ENCODE measurements at regions of chr16 and their contacts with region 1.

Region 1: DNA sequence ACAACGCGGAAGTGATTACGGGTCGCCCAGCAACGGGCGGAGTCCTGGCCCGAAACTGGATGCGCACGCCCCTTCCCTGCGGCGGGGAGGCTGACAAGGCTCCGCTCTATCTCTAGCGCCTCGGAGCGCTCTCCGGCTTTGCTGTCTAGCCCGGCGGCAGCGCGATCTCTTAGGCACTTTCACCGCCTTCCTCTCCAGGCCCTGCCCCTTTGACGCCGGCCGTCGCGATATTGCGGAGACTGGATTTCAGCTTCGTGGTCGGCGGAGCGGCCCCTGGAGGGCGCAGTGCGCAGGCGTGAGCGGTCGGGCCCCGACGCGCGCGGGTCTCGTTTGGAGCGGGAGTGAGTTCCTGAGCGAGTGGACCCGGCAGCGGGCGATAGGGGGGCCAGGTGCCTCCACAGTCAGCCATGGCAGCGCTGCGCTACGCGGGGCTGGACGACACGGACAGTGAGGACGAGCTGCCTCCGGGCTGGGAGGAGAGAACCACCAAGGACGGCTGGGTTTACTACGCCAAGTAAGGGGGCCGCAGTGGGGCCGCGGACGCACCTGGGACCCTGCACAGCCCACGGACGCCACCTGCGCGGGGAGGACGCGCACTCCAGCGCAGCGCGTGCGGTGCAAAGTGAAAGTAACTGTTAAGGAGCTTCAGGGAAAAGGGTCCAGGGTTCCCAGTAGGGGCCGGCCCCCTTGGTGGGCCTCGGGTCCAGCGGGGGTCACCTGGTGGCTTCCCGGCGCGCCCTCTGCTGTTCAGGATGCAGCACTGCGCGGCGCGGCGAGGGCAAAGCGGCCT is at the start of gene WWOX:
- DNase-seq: peak; percentile 98
- ATAC-seq: peak; percentile 96
- total RNA-seq, gene WWOX: 13.1 TPM

Region 2: DNA sequence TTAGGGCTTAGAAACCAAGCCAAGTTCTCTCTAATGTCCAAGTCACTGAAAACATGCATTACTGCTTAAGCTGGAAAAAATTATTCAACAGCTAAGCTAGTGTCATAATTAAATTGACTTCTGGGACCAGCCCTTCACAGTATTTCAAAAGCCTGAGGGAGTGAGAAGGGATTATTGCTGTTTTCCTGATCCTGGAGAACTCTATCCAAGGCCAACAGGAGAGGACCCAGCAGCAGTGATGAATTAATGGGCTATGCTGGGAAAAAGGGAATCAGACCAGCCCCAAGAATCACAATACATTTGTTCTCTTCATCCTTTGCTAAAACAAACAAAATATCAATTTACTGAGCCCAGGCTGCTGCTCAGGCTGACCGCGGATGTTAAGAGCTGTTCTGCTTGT is 111.8 kb before region 1 on chr16:
- intact Hi-C with region 1: no loop called
- DNase-seq: no peak
- ATAC-seq: no peak

Region 3: DNA sequence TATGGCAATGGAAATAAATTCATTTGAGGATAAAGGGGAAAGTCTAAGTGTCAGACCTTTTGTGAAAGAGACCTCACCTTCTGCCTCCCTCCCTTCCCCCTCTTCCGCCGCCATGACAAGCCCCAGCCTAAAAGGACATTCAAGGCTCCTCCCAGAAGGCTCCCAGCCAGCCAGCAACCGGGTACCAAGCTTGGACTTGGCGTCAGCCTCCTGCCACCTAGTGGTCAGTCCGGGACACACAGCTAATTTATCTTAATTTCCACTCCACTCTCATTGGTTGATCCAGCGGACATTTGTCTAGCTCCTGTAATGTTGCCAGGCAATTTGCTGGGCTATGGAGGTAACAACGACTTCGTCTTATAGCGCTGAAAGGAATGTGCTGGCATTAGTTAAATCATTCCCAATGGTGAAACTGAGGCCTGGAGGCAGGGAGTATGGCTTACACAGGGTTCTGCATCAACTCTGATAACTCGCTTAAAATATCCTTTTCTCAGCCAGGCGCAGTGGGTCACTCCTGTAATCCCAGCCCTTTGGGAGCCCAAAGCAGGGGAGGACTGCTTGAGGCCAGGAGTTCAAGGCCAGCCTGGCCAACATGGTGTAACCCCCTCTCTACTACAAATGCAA is 96.5 kb before region 1 on chr16:
- intact Hi-C with region 1: loop called (anchors 5 kb)
- DNase-seq: peak; percentile 89
- ATAC-seq: peak; percentile 86

Region 4: GRCh38 chr16:78060293-78060692 is 39.3 kb before region 1 on chr16:
- intact Hi-C with region 1: no loop called
- DNase-seq: no peak
- ATAC-seq: no peak

Region 5: DNA sequence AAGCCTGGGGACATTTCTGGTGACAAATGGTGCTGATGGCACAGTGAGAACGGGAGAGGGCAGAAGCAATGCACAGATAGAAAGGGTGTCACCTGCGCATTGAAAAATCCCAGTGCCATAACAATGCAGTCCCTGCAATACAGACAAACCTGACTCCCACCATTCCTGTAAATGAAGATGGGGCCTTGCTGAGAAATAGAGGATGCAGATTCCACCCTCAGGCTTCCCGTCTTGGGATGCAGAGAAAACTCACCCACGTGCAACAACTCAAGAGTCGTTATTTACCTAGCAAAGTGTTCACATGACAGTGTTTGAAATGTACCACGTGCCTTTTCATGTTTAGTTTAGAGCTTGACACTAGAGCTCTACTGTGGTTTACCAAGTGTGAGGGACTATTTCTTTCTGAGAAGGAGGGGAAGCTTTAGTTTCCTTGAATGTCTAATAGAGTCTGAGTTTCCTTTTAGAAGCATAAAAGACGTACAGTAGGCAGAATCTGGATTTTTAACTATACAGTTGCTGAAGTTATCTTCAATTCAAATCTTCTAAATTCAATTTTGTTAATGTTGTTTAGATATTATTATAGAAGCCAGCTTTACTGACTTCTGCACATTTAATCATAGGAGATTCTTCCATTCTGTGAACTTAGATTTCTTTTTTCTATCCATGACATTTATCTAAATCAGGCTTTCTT is 35.5 kb after region 1 on chr16:
- intact Hi-C with region 1: no loop called
- DNase-seq: no peak
- ATAC-seq: no peak

Region 6: DNA sequence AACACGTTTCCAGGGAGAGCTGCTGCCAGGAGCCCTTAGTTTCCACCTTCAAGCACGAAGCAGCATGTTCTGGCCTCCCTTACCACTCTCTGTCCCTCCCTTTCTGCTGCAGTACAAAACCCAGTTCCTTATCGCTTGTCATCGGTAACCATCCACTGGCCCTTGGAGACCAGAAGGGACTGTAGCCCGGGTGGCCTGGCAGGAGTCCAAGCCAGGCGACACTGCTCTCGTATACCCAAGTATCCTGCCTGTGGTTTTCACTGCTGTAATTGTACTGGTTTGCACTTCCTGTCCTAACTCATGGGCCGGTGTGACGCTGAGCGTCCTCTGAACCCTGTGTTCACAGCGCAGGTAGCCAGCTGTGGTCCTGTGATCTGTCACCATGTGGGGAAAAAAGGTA is 1419.9 kb after region 1 on chr16:
- intact Hi-C with region 1: no loop called
- DNase-seq: peak; percentile 78
- ATAC-seq: peak; percentile 44